Activated CD4-positive, alpha-beta memory T cell treated with anti-CD3 and anti-CD28 coated beads for 36 hours (primary cell): ENCODE measurements at regions of chr14 and their contacts with region 1.

Region 1: DNA sequence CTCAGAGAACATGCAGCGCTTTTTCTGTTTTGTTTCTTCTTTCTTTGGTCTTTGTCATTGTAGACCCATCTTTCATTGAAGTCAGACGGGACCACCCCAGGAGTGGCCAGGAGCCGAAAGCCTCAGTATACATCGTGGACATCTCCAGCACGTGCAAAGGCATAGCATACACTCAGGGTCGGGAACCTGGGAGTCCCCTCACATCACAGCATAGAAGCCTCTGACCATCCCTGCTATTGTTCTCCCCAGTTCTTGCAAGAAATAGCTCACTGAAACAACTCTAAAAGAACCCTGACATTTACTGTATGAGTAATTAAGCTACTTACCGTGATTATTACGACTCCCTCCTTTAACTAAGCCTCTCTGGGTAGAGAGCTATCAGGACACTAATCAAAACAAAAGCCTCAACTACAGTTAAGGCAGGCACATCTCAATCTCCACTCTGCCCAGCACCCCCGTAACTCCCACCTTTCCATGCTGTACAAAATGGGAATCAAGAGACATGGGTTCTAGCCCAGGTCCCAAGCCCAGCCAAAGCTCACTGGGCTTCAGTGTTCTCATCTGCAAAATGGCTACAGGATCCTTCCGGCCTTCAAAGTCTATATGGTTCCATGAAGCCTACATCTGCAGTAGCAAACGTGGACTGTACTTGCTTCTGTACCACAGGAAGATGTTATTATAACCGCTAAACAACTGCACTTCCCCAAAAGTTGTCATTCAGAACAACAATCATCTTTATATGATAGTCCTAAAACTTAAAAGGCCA is 6.7 kb downstream of the CCDC88C start:
- DNase-seq: peak; percentile 46
- H3K4me3 Mint-ChIP-seq: peak overlapping the region; percentile 63
- H3K27ac Mint-ChIP-seq: peak overlapping the region; percentile 93
- H3K4me1 Mint-ChIP-seq: peaks cover 87% of the 10 kb centered on the region
- H3K27me3 Mint-ChIP-seq: no peaks in the 10 kb centered on the region

Region 2: DNA sequence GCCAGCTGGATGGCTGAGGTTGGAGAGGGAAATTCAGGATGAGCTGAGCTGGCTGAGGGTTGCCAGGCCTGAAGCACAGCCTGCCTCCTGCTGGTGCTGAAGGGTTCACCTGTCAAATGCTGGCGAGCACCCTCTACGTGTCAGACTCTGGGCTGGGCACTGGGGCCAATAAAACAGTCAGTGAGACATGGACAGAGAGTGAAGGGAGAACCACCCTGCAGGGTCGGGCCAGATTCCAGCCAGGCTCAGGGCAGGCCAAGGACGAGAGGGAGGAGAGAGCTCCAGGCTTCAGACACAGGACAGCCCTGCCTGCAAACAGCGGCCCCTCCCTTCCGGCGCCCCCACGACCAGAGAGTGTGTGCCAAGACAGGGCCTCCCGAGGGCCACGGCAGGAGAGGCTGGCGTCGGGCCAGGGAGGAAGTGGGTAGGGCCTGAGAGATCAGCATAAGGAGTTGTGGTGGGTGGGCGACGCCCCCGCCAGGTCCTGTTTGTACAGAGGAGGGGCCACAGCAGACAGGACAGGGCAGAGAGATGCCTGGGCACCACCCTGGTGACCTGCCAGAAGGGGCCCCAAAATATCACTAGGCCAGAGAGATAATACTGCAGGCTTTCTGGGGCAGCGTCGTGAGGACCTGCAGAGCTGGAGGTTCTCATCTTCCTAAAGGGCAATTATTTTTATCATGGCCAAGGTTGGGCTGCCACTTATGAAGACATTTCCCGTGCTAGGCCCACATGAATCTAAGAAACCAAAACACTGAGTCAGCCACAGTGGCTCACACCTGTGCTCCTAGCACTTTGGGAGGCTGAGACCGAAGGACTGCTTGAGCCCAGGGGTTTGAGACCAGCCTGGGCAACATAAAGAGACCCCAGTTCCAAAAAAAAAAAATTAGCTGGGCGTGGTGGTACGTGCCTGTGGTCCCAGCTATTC is 93.3 kb before region 1 on chr14:
- CTCF ChIA-PET with region 1: interaction called, 5 read pairs
- POLR2A ChIA-PET with region 1: interaction called, 3 read pairs
- intact Hi-C with region 1: loop called (anchors 1 kb)
- DNase-seq: peak; percentile 92
- H3K4me3 Mint-ChIP-seq: peak overlapping the region; percentile 60
- H3K27ac Mint-ChIP-seq: peak overlapping the region; percentile 94
- H3K4me1 Mint-ChIP-seq: peaks cover 78% of the 10 kb centered on the region
- H3K27me3 Mint-ChIP-seq: no peaks in the 10 kb centered on the region

Region 3: GRCh38 chr14:91373591-91374254 is 37.2 kb before region 1 on chr14:
- CTCF ChIA-PET with region 1: interaction called, 7 read pairs
- POLR2A ChIA-PET with region 1: interaction called, 8 read pairs
- intact Hi-C with region 1: loop called (anchors 1 kb)
- DNase-seq: peak; percentile 78
- H3K4me3 Mint-ChIP-seq: peak overlapping the region; percentile 59
- H3K27ac Mint-ChIP-seq: peak overlapping the region; percentile 86
- H3K4me1 Mint-ChIP-seq: peaks cover 100% of the 10 kb centered on the region
- H3K27me3 Mint-ChIP-seq: no peaks in the 10 kb centered on the region

Region 4: DNA sequence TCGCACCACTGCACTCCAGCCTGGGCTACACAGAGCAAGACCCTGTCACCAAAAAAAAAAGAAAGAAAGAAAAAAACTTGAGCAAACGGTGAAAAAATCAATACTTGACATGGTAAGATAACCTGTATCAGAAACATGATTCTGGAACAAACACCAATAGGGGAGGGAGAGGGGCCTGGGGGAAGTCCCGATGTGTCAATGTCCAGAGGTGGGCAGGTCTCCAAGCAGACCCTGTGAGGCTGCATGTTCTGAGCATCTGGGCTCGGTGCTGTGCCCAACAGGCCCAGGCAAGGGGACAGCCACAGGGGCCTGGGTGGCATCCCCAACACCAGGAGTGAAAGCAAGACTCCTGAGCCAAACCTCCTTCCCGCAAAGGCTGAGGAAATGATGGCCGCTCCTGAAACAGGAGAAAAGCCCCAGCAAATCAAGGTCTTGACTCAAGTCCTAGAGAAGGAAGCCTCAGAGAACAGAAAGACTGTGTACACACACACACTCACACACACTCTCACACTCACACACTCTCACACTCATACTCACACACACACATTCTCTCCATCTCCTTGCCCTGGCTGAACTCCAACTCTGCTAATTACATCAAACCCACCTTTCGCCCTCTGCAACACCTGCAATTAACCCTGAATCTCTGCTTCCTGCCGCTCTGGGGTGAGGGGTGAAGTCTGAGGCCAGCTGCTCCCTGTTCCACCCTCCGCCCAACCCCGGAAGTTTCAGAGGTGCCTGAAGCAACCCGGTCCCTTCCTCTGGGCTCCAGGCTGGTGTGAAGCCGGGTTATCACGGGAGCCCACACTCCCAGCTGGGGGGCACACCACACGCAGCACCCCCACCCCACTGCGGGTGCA is 13.8 kb before region 1 on chr14:
- CTCF ChIA-PET with region 1: interaction called, 16 read pairs
- POLR2A ChIA-PET with region 1: interaction called, 41 read pairs
- intact Hi-C with region 1: loop called (anchors 1 kb)
- DNase-seq: peak; percentile 84
- H3K4me3 Mint-ChIP-seq: peak overlapping the region; percentile 64
- H3K27ac Mint-ChIP-seq: peak overlapping the region; percentile 89
- H3K4me1 Mint-ChIP-seq: peaks cover 92% of the 10 kb centered on the region
- H3K27me3 Mint-ChIP-seq: no peaks in the 10 kb centered on the region

Region 5: DNA sequence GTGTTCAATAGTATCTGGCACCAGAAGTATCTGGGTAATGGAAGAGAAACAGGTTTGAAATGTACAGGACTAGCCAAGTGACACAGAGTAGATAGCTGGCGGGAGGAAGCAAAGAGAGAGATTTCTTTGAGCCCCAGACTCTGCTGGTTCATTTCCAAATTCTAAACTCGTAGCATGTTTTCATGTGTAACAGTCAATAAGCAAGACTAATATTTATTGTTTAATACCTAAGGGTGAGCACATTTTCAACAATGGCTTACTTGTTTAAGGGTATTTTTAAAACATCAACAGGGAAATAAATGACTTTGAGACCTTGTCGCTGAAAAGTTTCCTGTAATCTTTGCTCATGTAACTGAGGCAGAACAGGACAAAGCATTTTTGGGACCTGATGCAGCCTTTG is 18.4 kb after region 1 on chr14:
- CTCF ChIA-PET with region 1: no interaction called
- POLR2A ChIA-PET with region 1: no interaction called
- intact Hi-C with region 1: no loop called
- DNase-seq: no peak
- H3K4me3 Mint-ChIP-seq: no peak overlapping the region
- H3K27ac Mint-ChIP-seq: no peak overlapping the region
- H3K4me1 Mint-ChIP-seq: peaks cover 12% of the 10 kb centered on the region
- H3K27me3 Mint-ChIP-seq: no peaks in the 10 kb centered on the region